ENCODE measurements at regions of chr15 and their contacts with region 1.

Region 1: GRCh38 chr15:98518823-98519561 is 129.3 kb upstream of the IGF1R start:
- DNase-seq: peak in 4 of 10 donors; percentile 38 to 55 (median 48)
- H3K4me3 ChIP-seq: peak overlapping the region in 6 of 59 donors; percentile 5 to 23 (median 20)
- H3K27ac ChIP-seq: no peak overlapping the region
- H3K27me3 ChIP-seq: no peaks in the 10 kb centered on the region
- CTCF ChIP-seq: peak; percentile 66 to 97 (median 82)

Region 2: GRCh38 chr15:98428253-98428989 is 90.6 kb before region 1 on chr15:
- intact Hi-C with region 1: no loop called
- DNase-seq: peak; percentile 16 to 81 (median 60)
- H3K4me3 ChIP-seq: peak overlapping the region in 58 of 59 donors; percentile 3 to 65 (median 50)
- H3K27ac ChIP-seq: peak overlapping the region in 8 of 59 donors; percentile 8 to 60 (median 36)
- H3K27me3 ChIP-seq: peaks cover 0 to 27% (median 6%) of the 10 kb centered on the region in 45 donors
- CTCF ChIP-seq: peak; percentile 69 to 95 (median 86)

Region 3: DNA sequence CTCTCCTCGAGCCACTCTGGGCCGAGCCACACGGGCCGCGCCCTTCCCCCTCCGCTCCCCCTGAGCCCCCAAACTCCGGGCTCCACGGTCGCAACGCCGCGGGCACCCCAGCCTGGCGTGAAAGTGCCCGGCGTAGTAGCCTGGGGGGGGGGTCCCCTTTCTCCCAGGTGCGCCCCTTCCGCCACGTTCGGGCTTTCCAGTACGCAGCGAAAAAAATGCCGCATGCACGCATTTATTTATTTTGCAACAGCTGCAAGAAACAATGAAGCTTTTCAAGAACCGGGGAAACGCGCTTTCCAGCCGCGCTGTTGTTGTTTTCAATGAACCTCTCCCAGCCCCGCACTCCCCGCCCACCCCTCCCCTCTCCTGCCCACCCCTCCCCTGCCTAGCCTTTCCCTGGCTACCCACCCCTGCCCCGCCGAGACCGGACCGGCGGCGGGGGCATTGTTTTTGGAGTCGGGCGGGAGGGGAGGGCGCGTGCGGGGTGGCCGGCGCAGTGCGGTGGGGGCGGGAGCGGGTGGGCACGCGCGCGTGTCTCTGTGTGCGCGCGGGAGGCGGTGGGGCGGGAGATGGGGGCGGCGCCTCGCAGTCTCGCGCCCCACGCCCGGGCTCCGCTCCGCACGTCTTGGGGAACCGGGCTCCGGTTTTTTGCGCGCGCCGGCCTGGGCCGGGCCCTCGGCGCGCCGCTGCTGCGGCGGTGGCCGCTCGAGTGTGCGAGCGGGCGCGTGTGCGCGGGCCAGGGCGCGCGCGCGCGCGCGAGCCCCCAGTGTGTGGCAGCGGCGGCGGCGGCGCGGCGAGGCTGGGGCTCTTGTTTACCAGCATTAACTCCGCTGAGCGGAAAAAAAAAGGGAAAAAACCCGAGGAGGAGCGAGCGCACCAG is 129.0 kb after region 1 on chr15 and contains the start of gene IGF1R:
- intact Hi-C with region 1: loop called (anchors 5 kb)
- DNase-seq: peak; percentile 70 to 89 (median 78)
- H3K4me3 ChIP-seq: peak within 1 kb of the TSS; percentile 73 to 98 (median 85)
- H3K27ac ChIP-seq: peak within 1 kb of the TSS; percentile 81 to 99 (median 94)
- H3K27me3 ChIP-seq: no peaks in the 10 kb centered on the region
- CTCF ChIP-seq: peak in 17 of 56 donors; percentile 4 to 47 (median 13)
- total RNA-seq, gene IGF1R: 53.3 to 130 (median 84.4) TPM

Region 4: GRCh38 chr15:98800437-98801233 is 281.6 kb after region 1 on chr15:
- intact Hi-C with region 1: loop called in 1 of 2 experiments (anchors 10 kb)
- DNase-seq: peak; percentile 25 to 82 (median 71)
- H3K4me3 ChIP-seq: peak overlapping the region in 55 of 59 donors; percentile 1 to 59 (median 30)
- H3K27ac ChIP-seq: peak overlapping the region; percentile 13 to 96 (median 85)
- H3K27me3 ChIP-seq: no peaks in the 10 kb centered on the region
- CTCF ChIP-seq: peak in 13 of 56 donors; percentile 3 to 19 (median 12)

Region 5: GRCh38 chr15:98904544-98904943 is 385.6 kb after region 1 on chr15:
- intact Hi-C with region 1: loop called (anchors 5 to 10 kb)
- DNase-seq: peak in 7 of 10 donors; percentile 31 to 64 (median 55)
- H3K4me3 ChIP-seq: no peak overlapping the region
- H3K27ac ChIP-seq: peak overlapping the region in 53 of 59 donors; percentile 9 to 91 (median 60)
- H3K27me3 ChIP-seq: no peaks in the 10 kb centered on the region
- CTCF ChIP-seq: peak; percentile 20 to 82 (median 69)